ENCODE measurements at regions of chr14 and their contacts with region 1.

Region 1: DNA sequence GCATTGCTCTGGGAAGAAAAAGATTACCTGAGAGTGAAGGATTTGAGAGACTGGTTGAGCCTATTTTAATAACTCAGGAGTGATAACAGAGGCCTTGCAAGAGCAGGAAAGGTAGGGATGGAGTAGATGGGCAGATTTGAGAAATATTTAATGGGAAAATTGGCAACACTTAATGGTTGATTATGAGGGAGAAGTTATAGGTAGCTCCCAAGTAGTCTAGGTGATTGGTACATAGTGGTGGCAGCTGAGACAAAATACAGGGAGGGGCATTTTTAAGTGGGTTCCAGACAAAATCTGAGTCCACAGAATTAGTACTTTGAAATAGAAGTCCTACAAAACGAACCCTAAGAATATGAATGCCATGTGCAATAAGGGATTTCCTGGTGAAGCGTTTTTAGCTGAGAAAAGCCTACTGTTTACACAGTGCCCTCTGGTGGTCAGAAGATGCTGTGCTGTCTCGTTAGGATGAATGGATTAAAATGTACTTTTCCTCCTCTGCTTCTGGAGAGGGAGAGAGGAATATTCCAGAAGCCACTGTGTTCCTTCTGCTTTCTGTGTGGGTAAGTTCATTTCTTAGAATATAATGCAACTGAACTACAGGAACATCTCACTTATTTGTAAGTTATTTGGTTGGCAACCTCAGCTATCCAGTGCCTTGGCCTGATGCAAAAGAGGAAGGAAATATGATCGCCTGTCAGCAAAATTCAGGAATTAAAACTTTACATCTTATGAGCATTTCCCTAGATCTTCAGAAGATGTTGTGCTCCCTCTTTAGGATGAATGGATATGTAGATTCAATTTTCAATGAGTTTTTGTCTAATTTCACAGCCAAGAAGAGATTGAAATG is 6.5 kb downstream of the ZBTB1 start:
- DNase-seq: peak; percentile 80
- H3K4me3 ChIP-seq: no peak overlapping the region
- H3K27ac ChIP-seq: peak overlapping the region in 3 of 4 donors; percentile 12 to 54 (median 42)
- H3K4me1 ChIP-seq: peaks cover 0 to 77% (median 52%) of the 10 kb centered on the region in 4 donors
- H3K27me3 ChIP-seq: no peaks in the 10 kb centered on the region
- CTCF ChIP-seq: peak; percentile 26 to 92 (median 82)
- EP300 ChIP-seq: no peak
- POLR2A ChIP-seq: no peak

Region 2: DNA sequence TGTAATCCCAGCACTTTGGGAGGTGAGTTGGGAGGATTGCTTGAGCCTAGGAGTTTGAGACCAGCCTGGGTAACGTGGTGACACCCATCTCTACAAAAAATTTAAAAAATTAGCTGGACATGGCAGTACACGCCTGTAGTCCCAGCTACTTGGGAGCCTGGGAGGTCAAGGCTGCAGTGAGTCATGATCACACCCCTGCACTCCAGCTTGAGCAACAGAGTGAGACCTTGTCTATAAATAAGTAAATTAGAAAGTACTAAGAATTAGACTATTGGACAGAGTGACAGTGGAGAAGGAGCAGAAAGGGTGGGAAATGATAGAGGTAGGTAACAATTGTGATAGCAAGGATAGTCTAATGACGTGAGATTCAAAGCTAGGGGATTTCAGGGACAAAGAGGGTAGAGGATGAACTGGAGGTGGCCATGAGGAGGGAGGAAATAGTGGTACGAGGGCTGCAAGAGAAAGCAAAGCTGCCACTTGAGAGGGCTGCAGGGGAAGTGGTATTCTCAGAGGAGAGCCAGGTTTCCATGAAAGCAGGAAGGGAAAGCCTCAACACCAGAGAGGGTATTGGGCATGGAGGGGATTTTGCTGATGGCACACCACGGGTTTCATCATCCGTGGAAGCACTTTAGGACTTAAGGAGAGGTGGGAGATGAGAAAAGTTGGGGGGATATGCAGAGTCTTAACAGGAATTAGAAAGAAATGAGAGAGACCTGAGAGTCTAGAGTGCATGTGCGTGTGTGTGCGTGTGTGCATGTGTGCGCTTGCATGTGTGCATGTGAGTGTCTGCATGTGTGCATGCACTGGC is 572.6 kb before region 1 on chr14:
- intact Hi-C with region 1: no loop called
- DNase-seq: no peak
- H3K4me3 ChIP-seq: no peak overlapping the region
- H3K27ac ChIP-seq: no peak overlapping the region
- H3K4me1 ChIP-seq: no peaks in the 10 kb centered on the region
- H3K27me3 ChIP-seq: no peaks in the 10 kb centered on the region
- CTCF ChIP-seq: no peak
- EP300 ChIP-seq: no peak
- POLR2A ChIP-seq: no peak

Region 3: DNA sequence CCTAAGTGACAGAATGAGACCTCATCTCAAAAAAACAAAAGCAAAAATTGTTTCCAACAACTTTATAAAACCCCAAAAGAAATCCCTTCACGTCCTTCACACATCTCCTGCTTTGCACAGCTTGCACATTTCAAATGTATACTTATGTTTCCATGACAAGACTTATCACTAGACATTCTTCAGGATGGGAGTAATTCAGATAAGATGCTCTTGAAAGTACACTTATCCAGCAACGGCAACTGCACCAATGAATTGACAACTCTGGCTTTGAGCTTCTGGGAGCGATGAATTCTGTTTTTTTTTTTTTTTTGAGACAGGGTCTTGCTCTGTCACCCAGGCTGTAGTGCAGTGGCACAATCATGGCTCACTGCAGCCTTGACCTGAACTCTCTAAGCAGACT is 76.5 kb before region 1 on chr14:
- intact Hi-C with region 1: loop called (anchors 1 kb)
- DNase-seq: no peak
- H3K4me3 ChIP-seq: no peak overlapping the region
- H3K27ac ChIP-seq: no peak overlapping the region
- H3K4me1 ChIP-seq: no peaks in the 10 kb centered on the region
- H3K27me3 ChIP-seq: no peaks in the 10 kb centered on the region
- CTCF ChIP-seq: no peak
- EP300 ChIP-seq: no peak
- POLR2A ChIP-seq: no peak

Region 4: DNA sequence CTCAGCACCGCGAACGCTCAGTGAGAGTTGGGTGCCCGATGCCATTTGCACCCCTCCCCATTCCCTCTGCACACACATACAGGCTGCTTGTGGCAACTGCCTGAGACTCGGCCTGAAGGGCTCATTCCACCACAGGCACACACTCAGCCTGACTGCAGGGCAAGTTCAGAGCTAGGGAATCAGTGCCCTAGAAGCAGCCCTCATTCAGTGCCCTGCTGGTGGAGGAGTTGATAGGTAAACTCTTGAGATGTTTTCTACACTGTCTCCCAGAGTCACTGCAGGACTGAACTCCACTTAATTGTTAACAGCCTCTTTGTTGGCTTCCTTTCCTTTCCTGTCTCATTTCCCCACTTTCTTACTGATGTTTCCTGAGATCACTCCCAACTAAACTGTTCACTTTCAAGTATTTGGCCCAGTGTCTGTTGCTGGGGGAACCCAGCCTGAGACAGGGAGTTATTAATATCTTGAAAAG is 55.6 kb after region 1 on chr14:
- intact Hi-C with region 1: no loop called
- DNase-seq: no peak
- H3K4me3 ChIP-seq: no peak overlapping the region
- H3K27ac ChIP-seq: peak overlapping the region; percentile 70 to 84 (median 81)
- H3K4me1 ChIP-seq: peaks cover 0 to 49% (median 42%) of the 10 kb centered on the region in 4 donors
- H3K27me3 ChIP-seq: no peaks in the 10 kb centered on the region
- CTCF ChIP-seq: no peak
- EP300 ChIP-seq: no peak
- POLR2A ChIP-seq: no peak

Region 5: GRCh38 chr14:64764641-64765520 is 253.8 kb after region 1 on chr14:
- intact Hi-C with region 1: loop called (anchors 10 kb)
- DNase-seq: peak; percentile 85
- H3K4me3 ChIP-seq: peak overlapping the region in 3 of 4 donors; percentile 30 to 42 (median 34)
- H3K27ac ChIP-seq: peak overlapping the region in 3 of 4 donors; percentile 67 to 86 (median 78)
- H3K4me1 ChIP-seq: peaks cover 0 to 52% (median 44%) of the 10 kb centered on the region in 4 donors
- H3K27me3 ChIP-seq: no peaks in the 10 kb centered on the region
- CTCF ChIP-seq: peak; percentile 92 to 96 (median 94)
- EP300 ChIP-seq: no peak
- POLR2A ChIP-seq: no peak